ENCODE measurements at regions of chr1 and their contacts with region 1.

Region 1: DNA sequence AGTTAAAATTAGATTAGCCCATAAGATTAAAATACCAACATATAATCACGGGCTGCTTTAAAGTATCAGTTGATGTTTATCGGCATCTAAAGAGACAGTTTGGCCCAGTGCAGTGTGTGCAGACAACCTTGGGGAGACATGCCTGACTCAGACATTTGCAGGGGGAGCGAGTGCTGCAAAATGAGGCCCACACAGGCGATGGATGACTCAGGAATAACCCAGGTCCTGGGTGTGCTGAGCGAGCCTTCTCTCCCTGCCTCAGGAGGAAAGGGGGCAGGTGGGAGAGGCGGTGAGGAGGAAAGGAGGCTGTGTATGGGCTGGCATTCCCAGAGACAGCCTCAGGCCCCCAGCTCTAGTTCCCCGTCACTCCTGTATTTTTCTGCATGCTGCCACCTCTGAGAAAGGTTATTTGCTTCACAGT is 9.0 kb downstream of the SLC9A1 start:
- H3K4me3 ChIP-seq: no peak overlapping the region
- H3K27ac ChIP-seq: no peak overlapping the region
- H3K4me1 ChIP-seq: peaks cover 13% of the 10 kb centered on the region
- CTCF ChIP-seq: no peak

Region 2: DNA sequence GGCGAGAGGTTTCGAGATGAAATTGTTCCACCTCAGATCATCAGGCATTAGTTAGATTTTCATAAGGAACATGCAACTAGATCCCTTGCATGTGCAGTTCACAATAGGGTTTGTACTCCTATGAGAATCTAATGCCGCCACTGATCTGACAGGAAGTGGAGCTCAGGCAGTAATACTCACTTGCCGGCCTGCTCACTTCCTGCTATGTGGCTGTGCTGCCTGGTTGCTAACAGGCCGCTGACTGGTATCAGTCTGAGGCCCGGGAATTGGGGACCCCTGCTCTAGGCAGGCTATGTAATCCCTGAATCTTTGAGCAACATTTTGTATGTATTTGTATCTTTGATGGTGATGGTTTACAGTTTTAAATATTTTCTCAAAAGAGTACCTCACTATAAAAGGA is 846.3 kb after region 1 on chr1:
- CTCF ChIA-PET with region 1: no interaction called
- POLR2A ChIA-PET with region 1: interaction called, 11 read pairs
- H3K4me3 ChIP-seq: no peak overlapping the region
- H3K27ac ChIP-seq: no peak overlapping the region
- H3K4me1 ChIP-seq: no peaks in the 10 kb centered on the region
- CTCF ChIP-seq: no peak

Measured in HEK293 (cell line).